Naive thymus-derived CD4-positive, alpha-beta T cell (primary cell): ENCODE measurements at regions of chr20 and their contacts with region 1.

Region 1: DNA sequence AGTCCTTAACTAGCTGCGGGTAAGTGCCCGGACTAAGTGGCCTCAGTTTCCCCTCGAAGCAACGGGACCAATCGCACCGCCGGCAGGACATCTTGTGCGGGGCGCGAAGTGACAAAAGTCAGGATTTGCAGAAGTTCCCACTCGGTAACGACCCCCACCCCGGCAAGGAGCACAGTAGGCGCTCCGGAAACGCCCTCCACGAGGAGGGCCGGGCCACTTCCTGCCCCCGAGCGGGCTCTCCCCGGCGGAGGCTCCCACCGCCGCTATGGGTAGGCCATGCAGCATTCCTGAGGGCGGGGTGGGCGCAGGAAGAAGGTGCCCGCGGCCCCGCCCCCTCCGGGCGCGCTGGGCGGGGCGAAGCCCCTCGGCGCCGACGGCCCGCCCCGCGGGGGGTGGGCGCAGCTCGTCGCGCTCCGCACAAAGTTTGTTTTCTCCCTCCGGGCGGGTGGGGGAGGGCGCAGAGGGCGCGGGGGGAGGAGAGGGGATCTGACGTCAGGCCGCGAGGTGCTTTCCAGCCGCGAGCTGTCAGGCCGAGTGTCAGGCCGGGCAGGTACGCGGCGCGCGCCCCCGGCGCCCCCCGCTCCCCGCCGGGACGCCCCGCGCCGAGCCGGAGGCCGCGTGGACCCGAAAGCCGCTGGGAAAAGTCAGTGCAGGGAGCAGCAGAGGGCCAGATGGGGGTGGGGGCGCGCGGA is at the start of gene TGIF2:
- DNase-seq: peak; percentile 86 to 93 (median 91)
- ATAC-seq: peak; percentile 84
- H3K4me3 ChIP-seq: peak within 1 kb of the TSS; percentile 70
- H3K4me3 Mint-ChIP-seq: peak within 1 kb of the TSS; percentile 88 to 97 (median 92)
- H3K27ac ChIP-seq: peak within 1 kb of the TSS; percentile 100
- H3K27ac Mint-ChIP-seq: peak within 1 kb of the TSS; percentile 96 to 100 (median 99)
- H3K4me1 ChIP-seq: peaks cover 13 to 34% of the 10 kb centered on the region in 2 donors
- H3K4me1 Mint-ChIP-seq: peaks cover 27 to 49% (median 40%) of the 10 kb centered on the region in 7 donors
- H3K27me3 ChIP-seq: no peaks in the 10 kb centered on the region
- H3K27me3 Mint-ChIP-seq: no peaks in the 10 kb centered on the region
- total RNA-seq, gene TGIF2: 35.6 to 44.3 (median 40.7) TPM

Region 2: DNA sequence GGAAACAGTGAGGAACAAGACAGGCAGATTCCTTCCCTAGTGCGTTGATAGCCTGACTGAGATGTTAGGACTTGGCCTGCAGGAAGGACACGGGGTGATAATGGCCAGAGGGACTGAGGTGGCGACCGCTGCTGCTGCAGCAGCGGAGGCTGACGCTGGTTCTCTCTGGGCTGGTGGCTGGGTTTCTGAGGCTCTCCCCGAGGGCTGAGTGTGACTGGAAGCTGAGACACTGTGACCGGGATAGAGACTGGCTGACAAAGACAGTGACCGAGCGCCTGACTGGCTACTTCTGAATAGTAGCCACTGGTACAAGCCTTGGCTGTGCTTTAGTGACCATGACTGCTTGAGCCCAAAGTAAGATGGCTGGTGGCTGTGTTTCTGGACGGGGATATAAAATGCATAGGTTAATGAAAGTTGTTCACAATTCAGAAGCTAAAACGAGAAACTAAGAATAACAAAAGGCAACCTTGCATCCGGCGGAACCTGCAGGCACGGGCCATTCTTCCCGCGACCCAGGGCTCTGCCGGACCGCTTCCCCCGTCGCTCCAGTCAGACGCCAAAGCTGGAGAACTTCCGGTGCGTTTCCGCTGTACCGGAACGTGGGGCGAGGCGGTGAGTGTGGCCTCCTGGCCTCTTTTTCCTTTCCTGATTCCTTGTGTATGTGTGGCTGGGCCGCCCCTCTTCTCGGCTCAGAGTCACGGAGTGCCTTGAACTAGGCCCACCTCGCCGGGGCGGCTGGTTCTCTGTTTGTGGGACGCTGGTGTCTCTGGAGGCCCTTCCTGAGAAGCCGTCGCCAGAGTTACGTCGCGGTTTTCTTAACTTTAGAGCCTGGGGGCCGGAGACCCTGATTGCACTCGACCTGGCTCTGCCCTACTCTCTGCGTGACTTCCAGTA is 337.1 kb before region 1 on chr20 and contains the start of gene AAR2:
- CTCF ChIA-PET with region 1: no interaction called
- POLR2A ChIA-PET with region 1: no interaction called
- intact Hi-C with region 1: loop called in 1 of 2 experiments (anchors 1 kb)
- DNase-seq: peak; percentile 63 to 80 (median 77)
- ATAC-seq: peak; percentile 96
- H3K4me3 ChIP-seq: peak within 1 kb of the TSS; percentile 77
- H3K4me3 Mint-ChIP-seq: peak within 1 kb of the TSS; percentile 86 to 98 (median 94)
- H3K27ac ChIP-seq: peak within 1 kb of the TSS; percentile 80
- H3K27ac Mint-ChIP-seq: peak within 1 kb of the TSS; percentile 91 to 98 (median 94)
- H3K4me1 ChIP-seq: peaks cover 4 to 22% of the 10 kb centered on the region in 2 donors
- H3K4me1 Mint-ChIP-seq: peaks cover 26 to 55% (median 37%) of the 10 kb centered on the region in 7 donors
- H3K27me3 ChIP-seq: no peaks in the 10 kb centered on the region
- H3K27me3 Mint-ChIP-seq: peaks cover 0 to 6% (median 0%) of the 10 kb centered on the region in 5 donors
- total RNA-seq, gene AAR2: 18.2 to 25.9 (median 23.7) TPM

Region 3: GRCh38 chr20:36439040-36439730 is 134.1 kb before region 1 on chr20:
- CTCF ChIA-PET with region 1: no interaction called
- POLR2A ChIA-PET with region 1: no interaction called
- intact Hi-C with region 1: loop called in 1 of 2 experiments (anchors 1 kb)
- DNase-seq: peak in 8 of 9 donors; percentile 41 to 73 (median 50)
- ATAC-seq: peak; percentile 51
- H3K4me3 ChIP-seq: no peak overlapping the region
- H3K4me3 Mint-ChIP-seq: no peak overlapping the region
- H3K27ac ChIP-seq: no peak overlapping the region
- H3K27ac Mint-ChIP-seq: no peak overlapping the region
- H3K4me1 ChIP-seq: no peaks in the 10 kb centered on the region
- H3K4me1 Mint-ChIP-seq: peaks cover 0 to 8% (median 4%) of the 10 kb centered on the region in 7 donors
- H3K27me3 ChIP-seq: no peaks in the 10 kb centered on the region
- H3K27me3 Mint-ChIP-seq: peaks cover 0 to 15% (median 5%) of the 10 kb centered on the region in 5 donors

Region 4: DNA sequence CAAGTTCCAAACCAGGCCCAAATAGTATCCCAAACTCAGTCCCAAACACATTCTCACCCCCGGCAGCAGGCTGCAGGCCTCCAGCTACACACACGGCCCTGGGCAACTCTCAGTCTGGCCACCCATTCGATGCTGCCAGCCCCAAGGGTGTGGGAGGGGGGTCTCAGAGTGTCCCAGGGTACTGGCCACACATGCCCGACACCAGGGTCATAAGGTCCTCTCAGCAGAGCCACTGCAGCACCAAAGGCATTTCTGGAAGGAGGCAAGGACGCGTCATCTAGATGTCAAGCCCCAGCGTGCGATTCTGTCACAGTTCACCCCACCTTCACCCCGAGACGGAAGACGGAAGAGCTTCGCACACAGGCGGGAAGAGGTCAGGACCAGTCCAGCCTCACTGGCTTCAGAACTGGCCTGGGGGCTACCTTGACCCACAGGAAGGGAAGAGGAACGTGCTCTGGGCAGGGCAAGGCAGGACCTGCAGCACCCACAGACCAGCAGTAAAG is 22.4 kb before region 1 on chr20:
- CTCF ChIA-PET with region 1: no interaction called
- POLR2A ChIA-PET with region 1: no interaction called
- intact Hi-C with region 1: loop called (anchors 1 kb)
- DNase-seq: no peak
- ATAC-seq: no peak
- H3K4me3 ChIP-seq: no peak overlapping the region
- H3K4me3 Mint-ChIP-seq: no peak overlapping the region
- H3K27ac ChIP-seq: no peak overlapping the region
- H3K27ac Mint-ChIP-seq: peak overlapping the region in 1 of 9 donors; percentile 60
- H3K4me1 ChIP-seq: no peaks in the 10 kb centered on the region
- H3K4me1 Mint-ChIP-seq: peaks cover 0 to 5% (median 2%) of the 10 kb centered on the region in 7 donors
- H3K27me3 ChIP-seq: no peaks in the 10 kb centered on the region
- H3K27me3 Mint-ChIP-seq: no peaks in the 10 kb centered on the region

Region 5: GRCh38 chr20:36591854-36592641 is 18.8 kb after region 1 on chr20:
- CTCF ChIA-PET with region 1: interaction called, 9 read pairs
- POLR2A ChIA-PET with region 1: interaction called, 123 read pairs
- intact Hi-C with region 1: loop called (anchors 1 kb)
- DNase-seq: peak in 6 of 9 donors; percentile 23 to 61 (median 42)
- ATAC-seq: peak; percentile 40
- H3K4me3 ChIP-seq: no peak overlapping the region
- H3K4me3 Mint-ChIP-seq: peak overlapping the region in 7 of 10 donors; percentile 22 to 60 (median 42)
- H3K27ac ChIP-seq: peak overlapping the region; percentile 56
- H3K27ac Mint-ChIP-seq: peak overlapping the region; percentile 42 to 90 (median 88)
- H3K4me1 ChIP-seq: peaks cover 14 to 16% of the 10 kb centered on the region in 2 donors
- H3K4me1 Mint-ChIP-seq: peaks cover 33 to 61% (median 48%) of the 10 kb centered on the region in 7 donors
- H3K27me3 ChIP-seq: no peaks in the 10 kb centered on the region
- H3K27me3 Mint-ChIP-seq: no peaks in the 10 kb centered on the region

Region 6: DNA sequence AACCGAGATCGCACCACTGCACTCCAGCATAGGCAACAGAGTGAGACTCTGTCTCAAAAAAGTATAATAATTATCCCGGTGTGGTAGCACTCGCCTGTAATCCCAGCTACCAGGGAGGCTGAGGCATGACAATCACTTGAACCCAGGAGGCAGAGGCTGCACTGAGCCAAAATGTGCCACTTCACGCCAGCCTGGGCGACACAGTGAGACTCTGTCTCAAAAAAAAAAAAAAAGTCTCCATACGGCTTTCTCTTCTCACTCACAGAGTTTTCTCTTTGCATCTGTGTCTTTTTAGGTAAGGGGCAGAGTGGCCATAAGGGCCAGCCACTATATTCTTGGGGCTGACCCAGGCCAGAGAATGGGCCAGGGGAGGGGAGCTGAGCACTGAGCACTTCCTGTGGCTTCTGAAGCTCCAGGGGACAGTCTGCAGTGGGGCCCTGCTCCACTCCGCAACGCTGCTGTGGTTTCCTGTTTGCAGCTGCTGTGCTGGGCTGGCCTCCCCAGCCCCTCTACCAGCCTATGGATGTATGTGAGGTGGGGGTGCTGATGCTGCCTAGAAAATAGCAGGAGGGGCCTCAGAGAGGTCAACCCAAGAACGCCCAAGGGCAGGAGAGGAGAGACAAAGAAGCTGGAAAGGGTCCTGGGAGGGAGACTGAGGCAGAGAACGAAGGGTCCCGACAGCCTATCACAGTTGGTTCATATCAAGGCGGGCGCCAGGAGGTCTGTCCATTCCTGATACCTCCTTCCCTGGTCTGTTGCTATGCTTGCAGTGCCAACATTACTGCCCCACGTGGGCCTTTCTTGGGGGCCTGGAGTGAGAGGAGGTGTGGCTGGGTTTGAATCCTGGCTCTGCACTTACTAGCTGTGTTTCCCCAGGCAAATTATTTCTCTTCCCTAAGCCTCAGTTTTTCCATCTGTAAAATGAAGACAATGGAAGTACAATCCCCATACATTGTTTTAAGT is 56.8 kb after region 1 on chr20:
- CTCF ChIA-PET with region 1: no interaction called
- POLR2A ChIA-PET with region 1: interaction called, 14 read pairs
- intact Hi-C with region 1: no loop called
- DNase-seq: peak in 8 of 9 donors; percentile 28 to 48 (median 46)
- ATAC-seq: peak; percentile 88
- H3K4me3 ChIP-seq: peak overlapping the region; percentile 1
- H3K4me3 Mint-ChIP-seq: peak overlapping the region; percentile 79 to 89 (median 82)
- H3K27ac ChIP-seq: peak overlapping the region; percentile 64
- H3K27ac Mint-ChIP-seq: peak overlapping the region; percentile 91 to 98 (median 95)
- H3K4me1 ChIP-seq: peaks cover 23 to 33% of the 10 kb centered on the region in 2 donors
- H3K4me1 Mint-ChIP-seq: peaks cover 20 to 55% (median 47%) of the 10 kb centered on the region in 7 donors
- H3K27me3 ChIP-seq: no peaks in the 10 kb centered on the region
- H3K27me3 Mint-ChIP-seq: no peaks in the 10 kb centered on the region

Region 7: GRCh38 chr20:36773597-36774390 is 200.5 kb after region 1 on chr20 and contains the start of gene DSN1:
- CTCF ChIA-PET with region 1: no interaction called
- POLR2A ChIA-PET with region 1: interaction called, 3 read pairs
- intact Hi-C with region 1: loop called in 1 of 2 experiments (anchors 1 kb)
- DNase-seq: peak; percentile 94 to 100 (median 97)
- ATAC-seq: peak; percentile 90
- H3K4me3 ChIP-seq: peak within 1 kb of the TSS; percentile 96
- H3K4me3 Mint-ChIP-seq: peak within 1 kb of the TSS; percentile 83 to 98 (median 95)
- H3K27ac ChIP-seq: peak within 1 kb of the TSS; percentile 93
- H3K27ac Mint-ChIP-seq: peak within 1 kb of the TSS; percentile 90 to 100 (median 97)
- H3K4me1 ChIP-seq: peaks cover 8 to 13% of the 10 kb centered on the region in 2 donors
- H3K4me1 Mint-ChIP-seq: peaks cover 8 to 36% (median 27%) of the 10 kb centered on the region in 7 donors
- H3K27me3 ChIP-seq: no peaks in the 10 kb centered on the region
- H3K27me3 Mint-ChIP-seq: peaks cover 0 to 2% (median 0%) of the 10 kb centered on the region in 5 donors
- total RNA-seq, gene DSN1: 9.2 to 27.5 (median 13.4) TPM